Transverse colon (tissue), 4 donors: ENCODE measurements at regions of chr3 and their contacts with region 1.

Region 1: DNA sequence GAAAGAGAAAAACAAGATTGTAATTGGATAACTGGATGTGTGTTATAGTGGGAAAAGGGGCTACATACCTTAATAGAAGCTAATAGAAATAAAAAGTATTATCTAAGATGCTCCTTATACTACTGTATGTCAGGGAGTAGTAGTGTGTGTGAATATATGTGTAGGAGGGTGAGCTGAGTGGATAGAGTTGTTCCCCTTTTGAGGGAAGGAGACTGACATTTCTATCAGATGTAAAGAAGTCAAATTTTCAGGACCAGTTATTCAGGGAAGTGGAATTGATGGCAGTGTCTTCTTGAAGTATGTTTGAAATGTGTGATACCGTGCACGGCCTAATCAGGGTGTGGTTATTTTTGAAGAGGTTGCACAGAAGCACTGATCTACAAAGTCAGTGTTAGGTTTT is 49.1 kb downstream of the PCOLCE2 start:
- DNase-seq: no peak
- H3K4me3 ChIP-seq: no peak overlapping the region
- H3K27ac ChIP-seq: no peak overlapping the region
- H3K4me1 ChIP-seq: no peaks in the 10 kb centered on the region
- H3K27me3 ChIP-seq: peaks cover 9% of the 10 kb centered on the region
- CTCF ChIP-seq: no peak
- EP300 ChIP-seq: no peak
- POLR2A ChIP-seq: no peak

Region 2: DNA sequence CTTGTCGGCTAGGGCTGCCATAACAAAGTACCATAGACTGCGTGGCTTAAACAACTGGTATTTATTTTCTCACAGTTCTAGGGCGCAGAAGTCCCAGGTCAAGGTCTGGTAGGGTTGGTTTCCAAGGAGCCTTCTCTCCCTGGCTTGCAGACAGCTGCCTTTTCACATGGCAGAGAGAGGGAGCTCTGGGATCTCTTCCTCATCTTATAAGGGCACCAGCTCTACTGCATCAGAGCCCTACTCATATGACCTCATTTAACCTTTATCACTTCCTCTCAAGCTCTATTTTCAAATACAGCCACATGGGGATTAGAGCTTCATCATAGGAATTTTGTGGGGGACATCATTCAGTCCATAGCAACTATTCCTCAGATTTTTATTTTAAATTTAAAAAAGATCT is 141.3 kb after region 1 on chr3:
- in situ Hi-C with region 1: loop called in 2 of 4 experiments (anchors 25 kb)
- intact Hi-C with region 1: loop called (anchors 5 kb)
- DNase-seq: no peak
- H3K4me3 ChIP-seq: no peak overlapping the region
- H3K27ac ChIP-seq: no peak overlapping the region
- H3K4me1 ChIP-seq: no peaks in the 10 kb centered on the region
- H3K27me3 ChIP-seq: peaks cover 20% of the 10 kb centered on the region
- CTCF ChIP-seq: no peak
- EP300 ChIP-seq: no peak
- POLR2A ChIP-seq: no peak